Dendritic cell treated with granulocyte-macrophage colony-stimulating factor and Interleukin-4, amounts not matched to agents 40 ng/mL and 50 ng/mL, for 4 days (primary cell): ENCODE measurements at regions of chr3 and their contacts with region 1.

Region 1: DNA sequence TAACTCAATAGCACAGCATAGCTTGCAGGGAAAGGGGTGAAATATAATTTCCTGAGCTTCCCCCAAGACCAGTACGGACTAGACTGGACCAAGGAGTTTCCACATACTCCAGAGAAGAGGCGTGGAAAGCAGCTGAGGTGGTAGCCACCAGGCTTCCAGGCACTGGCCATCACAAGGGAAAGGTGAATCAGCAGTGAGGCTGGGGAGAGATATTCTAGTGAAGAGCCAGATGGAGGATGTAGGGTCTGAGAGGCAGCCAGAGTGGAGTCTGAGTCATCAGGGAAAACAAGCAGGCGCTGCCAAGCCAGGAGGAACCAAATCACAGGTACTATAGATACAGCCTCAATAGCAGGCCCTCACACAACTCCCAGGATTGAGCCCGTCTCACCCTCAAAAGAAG is 9.6 kb upstream of the RASA2 start:
- H3K4me3 Mint-ChIP-seq: no peak overlapping the region
- H3K27ac Mint-ChIP-seq: no peak overlapping the region
- H3K4me1 Mint-ChIP-seq: peaks cover 16% of the 10 kb centered on the region
- H3K27me3 Mint-ChIP-seq: no peaks in the 10 kb centered on the region

Region 2: DNA sequence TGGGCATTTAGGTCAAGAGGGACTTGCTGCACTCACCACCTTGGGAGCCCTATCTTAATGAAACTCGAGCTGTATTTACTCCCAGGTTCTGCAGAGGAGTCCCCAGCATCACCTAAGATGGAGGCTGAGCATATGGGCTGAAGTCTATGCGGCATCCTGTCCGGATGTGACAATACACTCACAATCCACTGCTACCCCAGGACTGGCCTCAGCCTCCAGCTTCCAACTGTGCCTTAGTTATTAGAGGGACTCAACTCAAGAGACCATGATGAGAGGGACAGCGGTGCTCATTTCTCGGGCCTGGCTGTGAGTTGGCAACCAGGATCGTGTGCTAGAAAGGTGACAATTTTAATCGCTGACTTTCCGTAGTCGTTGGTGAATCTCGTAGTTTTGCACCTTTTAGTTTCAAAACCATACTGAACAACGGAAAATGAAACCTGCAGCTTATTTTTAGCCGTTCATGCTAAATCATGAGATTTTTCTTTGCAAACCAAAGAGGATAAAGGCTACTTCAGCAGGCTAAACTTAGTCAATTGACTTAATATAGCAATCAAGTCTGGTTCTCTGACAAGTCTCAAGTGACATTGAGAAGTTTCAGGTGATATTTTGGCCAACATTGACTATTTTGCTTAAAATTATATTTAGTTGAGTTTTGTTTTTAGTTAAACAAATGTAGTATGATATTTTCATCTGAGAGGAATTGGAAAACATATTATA is 97.8 kb before region 1 on chr3:
- intact Hi-C with region 1: no loop called
- H3K4me3 Mint-ChIP-seq: no peak overlapping the region
- H3K27ac Mint-ChIP-seq: no peak overlapping the region
- H3K4me1 Mint-ChIP-seq: peaks cover 16% of the 10 kb centered on the region
- H3K27me3 Mint-ChIP-seq: no peaks in the 10 kb centered on the region

Region 3: DNA sequence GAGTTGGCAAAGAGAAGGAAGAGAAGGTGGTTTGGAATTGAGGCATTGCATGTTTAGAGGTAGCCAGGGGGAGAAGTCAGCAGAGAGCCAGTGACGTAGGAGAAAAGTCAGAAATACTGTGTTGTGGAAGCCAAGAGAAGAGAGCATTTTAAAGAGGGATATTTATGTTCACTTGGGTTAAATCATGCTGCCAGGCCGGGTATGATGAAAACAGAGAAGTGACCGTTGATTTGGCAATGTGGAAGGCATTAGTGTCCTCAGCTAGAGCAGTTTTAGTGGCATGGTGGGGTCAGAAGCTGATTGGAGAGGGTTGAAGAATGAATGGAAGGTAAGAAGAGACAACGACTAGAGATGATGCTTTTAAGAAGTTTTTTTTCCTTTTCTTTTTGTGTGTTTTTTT is 34.1 kb after region 1 on chr3:
- intact Hi-C with region 1: loop called (anchors 5 kb)
- H3K4me3 Mint-ChIP-seq: no peak overlapping the region
- H3K27ac Mint-ChIP-seq: peak overlapping the region; percentile 28
- H3K4me1 Mint-ChIP-seq: peaks cover 28% of the 10 kb centered on the region
- H3K27me3 Mint-ChIP-seq: no peaks in the 10 kb centered on the region

Region 4: GRCh38 chr3:141561426-141562034 is 84.3 kb after region 1 on chr3:
- intact Hi-C with region 1: loop called (anchors 1 kb)
- H3K4me3 Mint-ChIP-seq: no peak overlapping the region
- H3K27ac Mint-ChIP-seq: no peak overlapping the region
- H3K4me1 Mint-ChIP-seq: no peaks in the 10 kb centered on the region
- H3K27me3 Mint-ChIP-seq: no peaks in the 10 kb centered on the region